Caco-2 (cell line): ENCODE measurements at regions of chr12 and their contacts with region 1.

Region 1: GRCh38 chr12:68831272-68831671 is 23.3 kb downstream of the MDM2 start:
- DNase-seq: no peak
- H3K4me3 ChIP-seq: no peak overlapping the region
- H3K4me3 Mint-ChIP-seq: no peak overlapping the region
- H3K27ac Mint-ChIP-seq: peak overlapping the region; percentile 10
- H3K4me1 ChIP-seq: peaks cover 14% of the 10 kb centered on the region
- H3K4me1 Mint-ChIP-seq: peaks cover 12% of the 10 kb centered on the region
- H3K27me3 ChIP-seq: no peaks in the 10 kb centered on the region
- H3K27me3 Mint-ChIP-seq: no peaks in the 10 kb centered on the region
- CTCF ChIP-seq: no peak

Region 2: GRCh38 chr12:68786929-68787328 is 44.3 kb before region 1 on chr12:
- CTCF ChIA-PET with region 1: interaction called, 6 read pairs
- POLR2A ChIA-PET with region 1: no interaction called
- intact Hi-C with region 1: loop called (anchors 1 kb)
- DNase-seq: no peak
- H3K4me3 ChIP-seq: no peak overlapping the region
- H3K4me3 Mint-ChIP-seq: peak overlapping the region; percentile 61
- H3K27ac Mint-ChIP-seq: no peak overlapping the region
- H3K4me1 ChIP-seq: peaks cover 23% of the 10 kb centered on the region
- H3K4me1 Mint-ChIP-seq: peaks cover 27% of the 10 kb centered on the region
- H3K27me3 ChIP-seq: no peaks in the 10 kb centered on the region
- H3K27me3 Mint-ChIP-seq: no peaks in the 10 kb centered on the region
- CTCF ChIP-seq: peak in 1 of 2 experiments; percentile 13